ENCODE measurements at regions of chr14 and their contacts with region 1.

Region 1: DNA sequence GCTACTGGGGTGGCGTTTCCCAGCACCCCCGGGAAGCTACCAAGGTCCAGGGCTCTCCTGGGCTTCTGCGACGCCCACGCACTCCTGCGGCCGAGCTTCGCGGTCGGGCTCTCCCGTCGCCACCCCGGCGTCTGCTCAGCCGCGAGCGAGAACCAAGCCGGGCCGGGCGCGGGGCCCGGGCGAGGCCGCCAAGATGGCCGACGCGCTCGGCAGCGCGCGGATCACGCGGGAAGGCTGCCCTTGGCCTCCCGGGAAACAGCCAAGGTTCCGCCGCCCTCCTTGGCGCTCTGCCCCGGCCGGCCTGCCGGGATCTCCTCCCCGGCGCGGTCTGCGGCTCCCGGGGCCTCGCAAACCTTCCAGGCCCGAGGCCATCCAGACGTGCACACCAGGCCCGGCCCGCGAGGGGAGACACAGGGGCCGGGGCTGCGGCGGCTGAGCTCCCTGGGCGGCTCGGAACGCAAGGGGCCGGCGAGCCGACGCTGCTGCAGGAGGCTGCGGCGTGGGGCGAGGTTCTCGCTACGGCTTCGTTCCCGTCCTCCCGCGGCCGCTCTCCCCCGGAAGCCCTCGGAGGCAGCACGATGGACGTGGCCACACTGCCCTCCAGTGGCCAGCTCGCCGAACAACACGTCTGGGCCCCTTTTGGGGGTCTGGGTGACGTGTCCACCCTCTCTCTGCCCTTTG is 23.5 kb upstream of the ZFP36L1 start:
- DNase-seq: peak; percentile 93
- ATAC-seq: peak; percentile 87
- H3K4me3 Mint-ChIP-seq: peak overlapping the region; percentile 68
- H3K27ac Mint-ChIP-seq: peak overlapping the region; percentile 86
- H3K4me1 Mint-ChIP-seq: peaks cover 52% of the 10 kb centered on the region
- H3K27me3 Mint-ChIP-seq: no peaks in the 10 kb centered on the region

Region 2: DNA sequence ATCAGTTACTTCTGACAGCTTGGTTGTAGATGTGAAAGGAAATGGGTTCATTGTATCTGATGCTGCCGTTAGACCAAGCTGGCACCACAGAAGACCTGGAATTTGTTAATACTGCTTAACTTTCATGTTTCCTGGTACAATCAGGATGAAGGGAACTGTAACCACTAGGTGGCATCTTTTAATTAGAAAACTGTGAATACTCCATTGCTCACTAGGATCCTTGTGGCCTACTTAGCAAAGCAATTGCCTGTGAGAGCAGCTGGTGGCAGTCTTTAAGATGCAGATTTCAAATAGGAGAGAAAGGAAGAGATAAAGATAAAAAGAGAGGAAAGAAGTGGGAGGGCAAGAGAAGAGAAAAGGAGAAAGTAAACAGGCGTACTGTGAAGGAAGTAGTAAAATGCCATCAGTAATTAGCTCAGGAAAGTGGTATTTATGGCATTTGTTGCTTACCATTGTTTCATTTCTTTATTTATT is 882.4 kb before region 1 on chr14:
- CTCF ChIA-PET with region 1: interaction called, 12 read pairs
- DNase-seq: no peak
- ATAC-seq: peak; percentile 70
- H3K4me3 Mint-ChIP-seq: no peak overlapping the region
- H3K27ac Mint-ChIP-seq: no peak overlapping the region
- H3K4me1 Mint-ChIP-seq: peaks cover 2% of the 10 kb centered on the region
- H3K27me3 Mint-ChIP-seq: no peaks in the 10 kb centered on the region

Region 3: DNA sequence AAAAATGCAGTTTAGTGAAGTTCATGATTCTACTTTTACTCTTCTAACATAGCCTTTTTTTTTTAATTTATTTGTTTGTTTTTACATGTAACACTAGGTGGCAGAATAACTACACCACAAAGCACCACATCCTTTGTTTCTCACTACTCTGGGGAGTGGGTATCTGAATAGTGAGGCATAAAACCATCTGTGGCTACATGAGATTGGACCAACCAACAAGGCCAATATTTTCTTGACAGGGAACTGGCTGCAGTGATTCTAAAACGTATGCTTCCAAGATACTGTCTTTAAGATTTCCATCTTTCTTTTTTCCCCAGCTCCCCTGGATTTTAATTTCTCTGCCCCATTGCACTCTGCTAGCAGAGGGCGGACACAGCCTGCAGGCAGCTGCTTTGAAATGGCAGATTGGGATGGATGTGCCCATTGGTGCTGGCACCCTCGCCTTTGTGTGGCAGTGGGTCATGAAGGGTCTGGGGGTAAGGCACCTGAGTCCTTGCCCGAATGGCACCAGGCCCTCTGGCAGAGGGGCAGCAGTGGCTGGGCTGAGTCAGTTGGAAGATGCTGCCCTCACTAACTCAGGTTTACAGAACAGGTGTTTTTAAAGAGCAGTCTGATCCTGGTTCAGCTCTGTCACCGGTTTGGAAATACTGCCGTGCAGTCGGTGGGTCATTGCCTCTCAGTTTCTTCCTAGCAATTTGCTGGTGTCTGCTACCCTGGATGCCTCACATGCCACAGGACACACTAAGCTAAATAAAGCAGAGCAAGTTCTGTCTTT is 567.7 kb before region 1 on chr14:
- CTCF ChIA-PET with region 1: interaction called, 49 read pairs
- DNase-seq: no peak
- ATAC-seq: peak; percentile 36
- H3K4me3 Mint-ChIP-seq: no peak overlapping the region
- H3K27ac Mint-ChIP-seq: no peak overlapping the region
- H3K4me1 Mint-ChIP-seq: peaks cover 4% of the 10 kb centered on the region
- H3K27me3 Mint-ChIP-seq: no peaks in the 10 kb centered on the region

Region 4: DNA sequence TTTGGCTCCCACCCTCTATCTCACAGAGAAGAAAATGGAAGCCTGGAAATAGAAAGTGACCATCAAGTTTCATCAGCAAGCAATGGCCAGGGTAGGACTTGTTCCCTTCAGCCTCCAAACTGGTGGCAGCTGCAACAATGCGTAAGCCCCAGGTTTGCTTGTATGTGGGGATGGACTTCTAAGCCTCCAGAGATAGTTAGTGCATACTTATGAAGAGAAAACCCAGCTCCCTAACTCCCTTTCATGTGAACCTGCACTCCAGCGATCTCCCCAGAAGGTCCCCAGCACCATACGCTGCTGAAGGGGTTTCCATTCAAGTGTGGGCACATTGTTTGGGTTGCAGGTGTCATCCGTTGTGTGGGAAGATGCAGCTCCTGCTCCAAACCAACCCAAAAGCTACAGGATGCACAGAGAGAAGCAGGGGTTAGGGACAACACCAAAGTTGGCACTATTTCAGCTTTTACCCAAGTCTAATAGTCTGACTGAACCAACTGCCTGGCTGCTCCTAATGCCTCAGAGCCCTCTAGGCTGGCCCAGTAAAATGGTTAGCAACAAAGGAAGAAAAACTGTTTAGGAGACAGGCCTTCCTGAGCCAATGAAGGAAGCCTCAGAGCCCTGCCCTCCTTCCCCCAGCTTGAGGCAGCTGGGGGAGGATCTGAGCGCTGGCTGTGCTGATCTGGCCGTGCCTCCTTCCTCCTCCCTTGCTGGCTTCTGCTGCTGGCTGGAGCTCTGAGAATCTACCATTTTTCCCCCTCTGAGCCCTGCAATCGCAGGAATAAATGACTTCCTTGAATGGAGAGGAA is 35.8 kb before region 1 on chr14:
- CTCF ChIA-PET with region 1: interaction called, 237 read pairs
- DNase-seq: peak; percentile 80
- ATAC-seq: peak; percentile 66
- H3K4me3 Mint-ChIP-seq: peak overlapping the region; percentile 63
- H3K27ac Mint-ChIP-seq: peak overlapping the region; percentile 98
- H3K4me1 Mint-ChIP-seq: peaks cover 59% of the 10 kb centered on the region
- H3K27me3 Mint-ChIP-seq: no peaks in the 10 kb centered on the region

Region 5: GRCh38 chr14:68843471-68844209 is 27.2 kb after region 1 on chr14:
- CTCF ChIA-PET with region 1: interaction called, 30 read pairs
- DNase-seq: peak; percentile 81
- ATAC-seq: peak; percentile 89
- H3K4me3 Mint-ChIP-seq: no peak overlapping the region
- H3K27ac Mint-ChIP-seq: no peak overlapping the region
- H3K4me1 Mint-ChIP-seq: peaks cover 15% of the 10 kb centered on the region
- H3K27me3 Mint-ChIP-seq: peaks cover 13% of the 10 kb centered on the region

Region 6: GRCh38 chr14:69068744-69069421 is 252.5 kb after region 1 on chr14:
- CTCF ChIA-PET with region 1: no interaction called
- DNase-seq: no peak
- ATAC-seq: no peak
- H3K4me3 Mint-ChIP-seq: no peak overlapping the region
- H3K27ac Mint-ChIP-seq: peak overlapping the region; percentile 24
- H3K4me1 Mint-ChIP-seq: peaks cover 22% of the 10 kb centered on the region
- H3K27me3 Mint-ChIP-seq: no peaks in the 10 kb centered on the region